Dendritic cell treated with granulocyte-macrophage colony-stimulating factor and Interleukin-4, amounts not matched to agents 40 ng/mL and 50 ng/mL, for 4 days (primary cell): ENCODE measurements at regions of chr6 and their contacts with region 1.

Region 1: GRCh38 chr6:158009114-158009891 is 27.6 kb downstream of the SYNJ2 start:
- H3K4me3 Mint-ChIP-seq: peak overlapping the region; percentile 40
- H3K27ac Mint-ChIP-seq: peak overlapping the region; percentile 87
- H3K4me1 Mint-ChIP-seq: peaks cover 77% of the 10 kb centered on the region
- H3K27me3 Mint-ChIP-seq: peaks cover 9% of the 10 kb centered on the region

Region 2: GRCh38 chr6:157464653-157465535 is 544.4 kb before region 1 on chr6:
- intact Hi-C with region 1: no loop called
- H3K4me3 Mint-ChIP-seq: no peak overlapping the region
- H3K27ac Mint-ChIP-seq: no peak overlapping the region
- H3K4me1 Mint-ChIP-seq: peaks cover 10% of the 10 kb centered on the region
- H3K27me3 Mint-ChIP-seq: no peaks in the 10 kb centered on the region

Region 3: DNA sequence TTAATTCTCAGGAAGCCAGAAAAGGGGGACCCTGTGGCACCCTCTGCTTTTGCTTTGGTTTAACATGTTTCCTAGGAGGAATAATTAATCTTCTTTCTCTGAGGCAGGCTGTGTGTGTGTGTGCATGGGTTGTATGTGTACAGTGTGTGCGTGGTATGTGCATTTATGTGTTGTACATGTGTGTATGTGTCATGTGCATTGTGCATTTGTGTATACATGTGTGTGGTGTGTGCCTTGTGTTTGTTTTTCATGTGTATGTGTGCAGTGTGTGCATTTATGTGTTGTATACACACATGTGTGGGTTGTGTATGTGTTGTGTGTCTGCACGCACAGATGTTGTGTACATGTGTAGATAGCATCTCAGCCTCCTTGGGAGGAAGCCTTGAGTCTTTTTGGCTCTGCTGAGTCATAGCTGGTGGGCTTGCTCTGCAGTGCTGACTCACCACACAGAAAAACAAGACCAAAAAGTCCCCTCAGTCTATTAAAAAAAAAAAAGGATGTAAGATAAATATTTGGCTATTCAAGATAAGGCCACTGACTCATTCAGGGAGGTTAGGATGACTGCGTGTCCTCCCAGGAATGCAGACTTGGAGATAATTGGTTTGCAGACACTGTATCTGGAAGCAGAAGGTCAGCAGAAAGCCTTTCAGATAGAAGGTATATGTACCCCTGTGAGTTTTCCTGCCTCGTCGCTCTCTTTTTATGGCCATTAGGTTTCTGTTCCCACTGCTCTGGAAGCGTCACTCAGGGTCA is 30.9 kb after region 1 on chr6:
- intact Hi-C with region 1: loop called (anchors 5 kb)
- H3K4me3 Mint-ChIP-seq: peak overlapping the region; percentile 50
- H3K27ac Mint-ChIP-seq: peak overlapping the region; percentile 68
- H3K4me1 Mint-ChIP-seq: peaks cover 63% of the 10 kb centered on the region
- H3K27me3 Mint-ChIP-seq: peaks cover 20% of the 10 kb centered on the region